Calu3 (cell line): ENCODE measurements at regions of chr16 and their contacts with region 1.

Region 1: DNA sequence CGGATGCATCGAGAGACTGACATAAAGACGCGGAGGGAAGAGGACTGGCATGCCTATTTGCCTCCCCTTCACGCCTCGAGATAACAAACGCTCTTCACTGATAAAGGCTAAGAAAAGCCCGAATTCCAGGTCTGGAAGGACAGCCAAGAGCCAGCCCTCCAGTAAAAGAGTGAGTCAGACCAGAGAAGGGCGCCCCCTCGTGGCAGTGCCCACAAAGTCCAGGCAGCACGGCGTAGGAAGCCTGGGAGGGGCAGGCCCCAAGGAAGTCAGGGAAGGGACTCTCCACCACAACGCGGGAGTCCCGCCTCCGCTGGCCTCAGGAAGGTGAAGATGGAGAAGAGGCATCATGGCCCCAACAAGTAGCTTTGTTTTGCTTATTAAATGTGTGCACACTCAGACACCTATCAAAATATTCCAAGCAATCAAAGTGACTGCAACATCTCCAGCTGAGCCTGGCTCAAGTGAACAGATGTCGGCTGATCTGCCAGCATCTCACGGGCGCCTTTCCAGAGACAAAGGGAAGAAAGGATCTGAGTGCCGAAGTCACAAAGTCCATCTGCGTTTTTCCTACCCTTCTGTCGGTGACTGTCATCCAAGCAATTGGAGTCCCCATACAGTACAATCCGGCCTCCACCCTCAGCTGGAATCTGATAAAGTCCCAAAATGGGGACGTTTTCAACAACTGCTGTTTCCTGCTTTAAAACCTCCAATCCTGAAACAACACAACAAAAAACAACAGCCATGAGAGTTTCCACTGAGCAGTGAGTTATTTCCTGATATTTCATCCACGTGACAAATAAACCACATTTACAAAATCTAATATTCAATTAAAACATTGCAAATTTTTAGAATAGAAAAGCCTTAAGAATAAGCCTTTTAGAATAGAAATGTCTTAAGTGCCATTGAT is 20.4 kb upstream of the SLC38A8 start:
- DNase-seq: peak; percentile 86
- H3K4me3 Mint-ChIP-seq: no peak overlapping the region
- H3K27ac Mint-ChIP-seq: no peak overlapping the region
- H3K4me1 Mint-ChIP-seq: no peaks in the 10 kb centered on the region
- H3K27me3 Mint-ChIP-seq: no peaks in the 10 kb centered on the region
- CTCF ChIP-seq: peak; percentile 85

Region 2: GRCh38 chr16:83971165-83972130 is 91.5 kb before region 1 on chr16:
- CTCF ChIA-PET with region 1: no interaction called
- intact Hi-C with region 1: loop called (anchors 5 kb)
- DNase-seq: no peak
- H3K4me3 Mint-ChIP-seq: no peak overlapping the region
- H3K27ac Mint-ChIP-seq: no peak overlapping the region
- H3K4me1 Mint-ChIP-seq: no peaks in the 10 kb centered on the region
- H3K27me3 Mint-ChIP-seq: peaks cover 85% of the 10 kb centered on the region
- CTCF ChIP-seq: no peak